CD4-positive, alpha-beta T cell (primary cell): ENCODE measurements at regions of chr5 and their contacts with region 1.

Region 1: DNA sequence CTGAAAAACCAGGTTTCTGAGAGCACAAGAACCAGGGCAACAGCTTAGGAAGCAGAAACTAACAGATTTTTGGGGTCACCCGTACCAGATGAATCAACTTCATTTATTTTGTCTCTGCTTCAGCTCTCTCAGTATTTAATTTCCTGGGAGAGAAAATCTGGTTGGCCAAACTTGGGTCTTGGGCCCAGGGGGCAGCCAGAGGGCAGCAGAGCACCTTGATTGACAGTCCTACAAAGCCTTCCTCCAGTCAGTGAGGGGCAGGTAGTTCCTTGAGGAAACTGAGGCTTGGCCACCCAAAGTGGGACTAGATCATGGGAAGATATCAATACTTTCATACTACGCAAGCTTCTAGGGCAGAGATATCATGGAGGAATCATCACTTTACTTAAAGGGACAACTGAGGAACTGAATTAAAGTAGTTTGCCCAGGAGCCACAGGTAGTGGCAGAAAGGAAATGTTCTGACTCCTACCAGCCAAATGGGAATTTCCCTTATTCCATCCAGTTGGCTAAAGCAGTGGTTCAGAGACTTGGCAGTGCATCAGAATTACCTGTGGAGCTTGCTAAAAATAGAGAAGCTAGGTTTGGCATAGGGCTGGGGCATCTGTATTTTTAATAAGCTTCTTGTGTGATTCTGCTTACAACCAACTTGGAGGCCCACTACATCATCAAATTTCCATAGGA is 21.5 kb upstream of the ARHGAP26 start:
- DNase-seq: peak; percentile 29 to 74 (median 50)
- ATAC-seq: peak; percentile 55
- H3K4me3 ChIP-seq: no peak overlapping the region
- H3K4me3 Mint-ChIP-seq: no peak overlapping the region
- H3K27ac ChIP-seq: no peak overlapping the region
- H3K27ac Mint-ChIP-seq: no peak overlapping the region
- H3K4me1 ChIP-seq: no peaks in the 10 kb centered on the region
- H3K4me1 Mint-ChIP-seq: no peaks in the 10 kb centered on the region
- H3K27me3 ChIP-seq: no peaks in the 10 kb centered on the region
- H3K27me3 Mint-ChIP-seq: peaks cover 10% of the 10 kb centered on the region
- CTCF ChIP-seq: peak; percentile 70

Region 2: DNA sequence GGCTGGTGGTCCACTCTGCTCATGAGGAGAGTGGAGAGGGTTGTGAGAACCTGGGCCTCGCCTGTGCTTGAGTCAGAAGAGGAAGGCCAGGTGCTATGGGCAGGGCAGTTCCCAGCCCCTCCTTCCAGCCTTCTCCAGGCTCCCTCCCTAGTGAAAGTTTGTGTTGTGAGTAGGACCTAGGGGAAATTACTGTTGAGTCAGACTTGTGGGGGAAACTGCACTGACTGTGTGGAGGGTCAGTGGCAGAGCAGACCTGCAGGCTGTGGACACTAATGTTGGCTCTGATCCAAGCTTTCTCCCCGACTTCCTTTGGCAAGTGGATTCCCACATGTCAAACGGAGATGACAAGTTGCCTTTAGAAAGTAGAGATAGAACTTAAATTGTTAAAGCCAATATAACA is 124.1 kb after region 1 on chr5:
- CTCF ChIA-PET with region 1: interaction called, 19 read pairs
- POLR2A ChIA-PET with region 1: no interaction called
- intact Hi-C with region 1: loop called (anchors 1 kb)
- DNase-seq: peak in 2 of 14 experiments; percentile 17 to 34
- ATAC-seq: no peak
- H3K4me3 ChIP-seq: no peak overlapping the region
- H3K4me3 Mint-ChIP-seq: no peak overlapping the region
- H3K27ac ChIP-seq: no peak overlapping the region
- H3K27ac Mint-ChIP-seq: no peak overlapping the region
- H3K4me1 ChIP-seq: no peaks in the 10 kb centered on the region
- H3K4me1 Mint-ChIP-seq: no peaks in the 10 kb centered on the region
- H3K27me3 ChIP-seq: no peaks in the 10 kb centered on the region
- H3K27me3 Mint-ChIP-seq: no peaks in the 10 kb centered on the region
- CTCF ChIP-seq: no peak

Region 3: GRCh38 chr5:142881076-142881783 is 132.5 kb after region 1 on chr5:
- CTCF ChIA-PET with region 1: interaction called, 23 read pairs
- POLR2A ChIA-PET with region 1: interaction called, 5 read pairs
- intact Hi-C with region 1: loop called (anchors 1 kb)
- DNase-seq: peak in 3 of 14 experiments; percentile 20 to 71 (median 59)
- ATAC-seq: no peak
- H3K4me3 ChIP-seq: no peak overlapping the region
- H3K4me3 Mint-ChIP-seq: no peak overlapping the region
- H3K27ac ChIP-seq: no peak overlapping the region
- H3K27ac Mint-ChIP-seq: no peak overlapping the region
- H3K4me1 ChIP-seq: no peaks in the 10 kb centered on the region
- H3K4me1 Mint-ChIP-seq: no peaks in the 10 kb centered on the region
- H3K27me3 ChIP-seq: no peaks in the 10 kb centered on the region
- H3K27me3 Mint-ChIP-seq: no peaks in the 10 kb centered on the region
- CTCF ChIP-seq: no peak

Region 4: DNA sequence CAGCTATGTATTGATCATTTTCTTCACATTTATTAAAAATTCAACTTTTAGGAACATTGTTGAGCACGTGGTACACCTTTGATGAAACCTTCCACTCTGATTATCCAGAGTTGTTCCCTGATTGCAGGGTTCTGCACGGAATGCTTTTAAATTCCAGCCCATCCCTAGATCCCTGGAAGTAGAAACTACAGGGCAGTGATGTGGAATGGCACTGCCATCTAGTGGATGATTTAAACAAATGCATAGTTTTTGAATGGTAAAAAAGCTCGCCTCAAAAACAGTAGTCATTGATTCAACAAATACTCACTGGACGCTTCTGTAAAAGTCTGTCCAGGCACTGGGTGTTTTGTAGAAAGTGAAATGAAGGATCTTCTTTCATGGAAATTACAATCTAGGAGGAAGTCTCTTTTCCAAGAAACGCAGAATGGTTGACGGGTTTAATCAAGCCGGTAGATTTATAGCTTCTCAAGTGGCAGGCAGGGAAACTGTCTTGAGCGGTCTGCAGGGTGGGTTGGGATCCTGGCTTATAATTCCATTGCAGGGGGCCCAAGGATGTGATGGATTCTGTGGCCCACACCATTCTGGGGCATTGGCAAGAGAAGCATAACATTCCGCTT is 139.9 kb after region 1 on chr5:
- CTCF ChIA-PET with region 1: interaction called, 22 read pairs
- POLR2A ChIA-PET with region 1: interaction called, 7 read pairs
- intact Hi-C with region 1: loop called (anchors 2 kb)
- DNase-seq: peak in 4 of 14 experiments; percentile 28 to 53 (median 42)
- ATAC-seq: peak; percentile 37
- H3K4me3 ChIP-seq: no peak overlapping the region
- H3K4me3 Mint-ChIP-seq: no peak overlapping the region
- H3K27ac ChIP-seq: no peak overlapping the region
- H3K27ac Mint-ChIP-seq: no peak overlapping the region
- H3K4me1 ChIP-seq: no peaks in the 10 kb centered on the region
- H3K4me1 Mint-ChIP-seq: no peaks in the 10 kb centered on the region
- H3K27me3 ChIP-seq: no peaks in the 10 kb centered on the region
- H3K27me3 Mint-ChIP-seq: no peaks in the 10 kb centered on the region
- CTCF ChIP-seq: peak; percentile 84

Region 5: DNA sequence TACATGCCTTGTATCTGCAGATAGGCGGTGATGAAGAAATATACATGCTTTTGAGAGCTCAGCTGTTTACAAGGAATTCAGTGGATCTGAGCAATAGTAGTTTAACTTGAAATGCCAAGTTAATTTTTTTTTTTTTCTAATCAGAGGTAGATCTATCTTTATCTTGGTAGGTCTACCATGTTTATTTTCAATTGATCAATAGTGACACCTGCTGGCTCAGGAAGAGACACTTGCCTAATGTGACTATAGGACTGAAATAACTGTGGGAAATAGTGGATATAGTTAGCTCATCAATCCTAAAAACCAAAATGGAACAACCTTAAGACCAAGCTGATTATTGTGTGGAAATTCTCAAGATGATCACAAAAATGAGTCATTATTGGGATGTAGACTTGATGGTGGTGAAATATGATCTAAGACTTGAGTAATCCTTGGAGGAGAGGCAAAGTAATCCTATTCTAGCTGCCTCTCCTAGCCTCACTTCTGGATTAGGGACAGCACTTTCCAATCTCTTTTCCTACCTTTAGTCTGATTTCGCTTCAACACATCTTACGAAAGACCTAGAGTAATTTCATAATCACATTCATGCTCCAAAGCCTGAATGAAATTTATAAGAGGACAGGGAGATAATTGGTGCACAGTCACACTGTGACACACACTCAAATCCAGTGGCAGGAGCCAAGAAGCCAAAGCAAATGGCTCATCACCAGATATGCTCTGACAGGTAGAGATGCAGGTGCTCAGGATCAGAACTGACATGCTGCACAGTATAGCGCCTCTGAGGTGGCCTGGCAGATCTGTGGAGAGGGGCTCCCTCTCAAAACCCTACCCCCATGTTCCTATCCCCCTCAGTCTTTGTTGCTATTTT is 1219.5 kb after region 1 on chr5:
- CTCF ChIA-PET with region 1: no interaction called
- POLR2A ChIA-PET with region 1: no interaction called
- intact Hi-C with region 1: loop called in 1 of 2 experiments (anchors 10 kb)
- DNase-seq: peak in 4 of 14 experiments; percentile 5 to 52 (median 47)
- ATAC-seq: no peak
- H3K4me3 ChIP-seq: no peak overlapping the region
- H3K4me3 Mint-ChIP-seq: no peak overlapping the region
- H3K27ac ChIP-seq: no peak overlapping the region
- H3K27ac Mint-ChIP-seq: no peak overlapping the region
- H3K4me1 ChIP-seq: no peaks in the 10 kb centered on the region
- H3K4me1 Mint-ChIP-seq: no peaks in the 10 kb centered on the region
- H3K27me3 ChIP-seq: no peaks in the 10 kb centered on the region
- H3K27me3 Mint-ChIP-seq: peaks cover 7% of the 10 kb centered on the region
- CTCF ChIP-seq: peak; percentile 60